Heart left ventricle (tissue), 16 donors: ENCODE measurements at regions of chr9 and their contacts with region 1.

Region 1: GRCh38 chr9:34546834-34547827 is 24.3 kb upstream of the ENHO start:
- DNase-seq: peak in 4 of 5 donors; percentile 48 to 61 (median 52)
- ATAC-seq: peak; percentile 21 to 70 (median 58)
- H3K4me3 ChIP-seq: no peak overlapping the region
- H3K27ac ChIP-seq: no peak overlapping the region
- H3K4me1 ChIP-seq: peaks cover 0 to 5% (median 0%) of the 10 kb centered on the region in 12 donors
- H3K27me3 ChIP-seq: peaks cover 0 to 4% (median 0%) of the 10 kb centered on the region in 9 donors
- CTCF ChIP-seq: peak; percentile 52 to 75 (median 60)
- POLR2A ChIP-seq: no peak

Region 2: DNA sequence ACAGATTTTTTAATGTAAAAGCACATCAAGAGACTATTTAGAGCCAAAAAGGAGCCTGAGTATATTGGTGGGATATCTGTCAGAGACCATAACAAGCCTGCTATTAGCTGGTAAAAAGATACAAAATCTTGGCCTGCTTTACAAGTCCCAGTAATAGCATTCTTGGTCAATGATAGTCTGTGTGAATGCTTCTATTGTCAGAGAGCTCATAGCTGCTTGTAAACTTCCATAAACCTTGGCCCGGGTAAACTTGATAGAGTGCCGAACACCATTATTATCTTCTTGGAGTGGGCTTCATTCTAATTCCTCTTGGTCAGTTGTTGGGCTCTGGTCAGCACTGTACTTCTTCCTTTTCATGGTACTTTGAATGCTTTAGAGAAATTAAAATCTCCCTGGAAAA is 304.3 kb before region 1 on chr9:
- intact Hi-C with region 1: no loop called
- DNase-seq: no peak
- ATAC-seq: peak; percentile 8 to 67 (median 53)
- H3K4me3 ChIP-seq: peak overlapping the region in 1 of 12 donors; percentile 5
- H3K27ac ChIP-seq: peak overlapping the region; percentile 9 to 87 (median 66)
- H3K4me1 ChIP-seq: peaks cover 0 to 59% (median 33%) of the 10 kb centered on the region in 12 donors
- H3K27me3 ChIP-seq: no peaks in the 10 kb centered on the region
- CTCF ChIP-seq: no peak
- POLR2A ChIP-seq: no peak

Region 3: DNA sequence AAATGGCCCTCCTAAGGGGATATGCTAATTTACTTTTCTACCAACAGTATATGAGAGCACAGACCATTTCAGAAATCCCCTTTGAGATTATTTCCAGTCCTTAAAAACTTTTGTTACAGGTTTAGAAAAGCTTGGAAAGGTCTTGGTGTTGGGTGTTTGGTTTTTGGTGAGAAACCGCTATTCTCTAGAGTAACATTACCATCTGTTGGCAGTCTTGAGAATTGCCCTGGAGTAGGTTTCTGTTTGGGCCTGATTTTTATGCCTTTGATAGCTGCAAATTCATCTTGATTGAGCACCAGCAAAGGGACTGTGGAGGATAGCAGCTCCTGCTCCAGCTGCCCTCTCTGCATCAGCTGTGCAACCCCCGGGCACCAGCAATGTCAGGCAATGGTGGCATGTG is 209.7 kb before region 1 on chr9:
- intact Hi-C with region 1: loop called in 3 of 10 experiments (anchors 5 kb)
- DNase-seq: no peak
- ATAC-seq: no peak
- H3K4me3 ChIP-seq: no peak overlapping the region
- H3K27ac ChIP-seq: no peak overlapping the region
- H3K4me1 ChIP-seq: peaks cover 0 to 30% (median 12%) of the 10 kb centered on the region in 12 donors
- H3K27me3 ChIP-seq: no peaks in the 10 kb centered on the region
- CTCF ChIP-seq: no peak
- POLR2A ChIP-seq: no peak

Region 4: GRCh38 chr9:34437006-34437925 is 109.9 kb before region 1 on chr9:
- intact Hi-C with region 1: loop called in 4 of 10 experiments (anchors 2 to 5 kb)
- DNase-seq: peak in 4 of 5 donors; percentile 38 to 48 (median 42)
- ATAC-seq: peak; percentile 68 to 89 (median 84)
- H3K4me3 ChIP-seq: no peak overlapping the region
- H3K27ac ChIP-seq: no peak overlapping the region
- H3K4me1 ChIP-seq: peaks cover 3 to 42% (median 28%) of the 10 kb centered on the region in 12 donors
- H3K27me3 ChIP-seq: no peaks in the 10 kb centered on the region
- CTCF ChIP-seq: peak; percentile 66 to 85 (median 79)
- POLR2A ChIP-seq: no peak

Region 5: DNA sequence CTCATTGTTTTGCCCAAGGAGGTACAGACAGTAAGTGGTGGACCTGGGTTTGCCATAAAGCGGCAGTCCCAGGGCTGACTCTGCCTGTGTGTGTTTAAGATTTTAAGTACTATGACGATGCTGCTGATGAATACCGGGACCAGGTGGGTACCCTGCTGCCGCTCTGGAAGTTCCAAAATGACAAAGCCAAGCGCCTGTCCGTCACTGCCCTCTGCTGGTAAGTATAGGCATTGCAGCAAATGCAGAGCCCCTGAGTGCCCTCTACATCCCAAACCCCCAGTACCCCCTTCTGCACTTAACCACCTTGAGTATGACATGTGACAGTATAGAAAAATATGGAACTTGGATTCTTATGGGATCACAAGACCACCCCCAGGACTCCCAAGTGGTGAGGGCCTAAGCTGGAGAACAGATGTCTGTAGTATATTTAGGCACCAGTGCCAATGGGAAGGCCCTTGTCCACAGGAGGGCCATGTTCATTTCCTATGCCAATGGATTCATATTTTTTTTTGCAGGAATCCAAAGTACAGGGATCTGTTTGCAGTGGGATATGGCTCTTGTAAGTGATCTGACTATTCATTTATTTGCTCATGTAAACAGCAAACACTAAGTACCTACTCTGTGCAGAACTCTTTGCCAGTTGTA is 46.4 kb before region 1 on chr9:
- intact Hi-C with region 1: loop called in 3 of 10 experiments (anchors 5 kb)
- DNase-seq: peak in 4 of 5 donors; percentile 42 to 48 (median 46)
- ATAC-seq: peak; percentile 30 to 71 (median 54)
- H3K4me3 ChIP-seq: no peak overlapping the region
- H3K27ac ChIP-seq: no peak overlapping the region
- H3K4me1 ChIP-seq: peaks cover 0 to 26% (median 15%) of the 10 kb centered on the region in 12 donors
- H3K27me3 ChIP-seq: peaks cover 0 to 5% (median 0%) of the 10 kb centered on the region in 9 donors
- CTCF ChIP-seq: peak; percentile 94 to 99 (median 98)
- POLR2A ChIP-seq: no peak

Region 6: DNA sequence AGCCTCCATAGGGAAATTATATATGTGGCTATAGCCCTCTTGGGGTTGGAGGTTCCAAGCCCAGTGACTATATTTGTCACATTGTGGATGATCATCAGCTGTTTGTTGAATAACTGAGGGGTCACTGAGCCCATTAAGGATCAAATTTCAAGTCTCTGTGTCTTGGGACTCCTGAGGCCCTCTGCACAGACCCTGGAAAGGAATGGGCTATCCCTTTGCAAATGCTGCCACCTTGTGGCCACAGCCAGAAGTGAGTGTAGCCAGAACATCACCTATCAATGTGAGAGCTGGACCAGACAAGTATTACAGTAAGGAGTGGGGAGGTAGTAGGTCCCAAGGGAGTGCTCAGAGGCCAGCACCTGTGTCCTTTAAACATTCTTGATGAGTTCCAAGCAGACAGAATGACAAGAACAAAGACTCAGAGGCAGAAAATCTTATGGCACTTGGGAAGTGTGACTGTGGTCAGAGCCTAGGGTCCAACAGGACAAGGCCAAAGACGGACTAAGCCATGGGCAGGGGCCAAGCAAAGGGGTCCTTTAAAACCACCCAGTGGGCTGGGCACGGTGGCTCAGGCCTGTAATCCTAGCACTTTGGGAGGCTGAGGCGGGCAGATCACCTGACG is 56.6 kb after region 1 on chr9:
- intact Hi-C with region 1: loop called in 1 of 10 experiments (anchors 2 kb)
- DNase-seq: peak; percentile 70 to 84 (median 78)
- ATAC-seq: peak; percentile 80 to 88 (median 86)
- H3K4me3 ChIP-seq: no peak overlapping the region
- H3K27ac ChIP-seq: no peak overlapping the region
- H3K4me1 ChIP-seq: peaks cover 0 to 5% (median 0%) of the 10 kb centered on the region in 12 donors
- H3K27me3 ChIP-seq: no peaks in the 10 kb centered on the region
- CTCF ChIP-seq: peak; percentile 83 to 95 (median 92)
- POLR2A ChIP-seq: no peak